GM10248 (cell line): ENCODE measurements at regions of chr14 and their contacts with region 1.

Region 1: GRCh38 chr14:90903101-90903500 is 86.9 kb upstream of the TTC7B start:
- DNase-seq: peak; percentile 72
- CTCF ChIP-seq: peak; percentile 72

Region 2: GRCh38 chr14:90758028-90758889 is 144.8 kb before region 1 on chr14:
- CTCF ChIA-PET with region 1: interaction called, 14 read pairs
- POLR2A ChIA-PET with region 1: no interaction called
- DNase-seq: peak; percentile 99
- CTCF ChIP-seq: peak; percentile 98

Region 3: GRCh38 chr14:90865484-90865883 is 37.6 kb before region 1 on chr14:
- CTCF ChIA-PET with region 1: interaction called, 10 read pairs
- POLR2A ChIA-PET with region 1: no interaction called
- DNase-seq: no peak
- CTCF ChIP-seq: no peak

Region 4: DNA sequence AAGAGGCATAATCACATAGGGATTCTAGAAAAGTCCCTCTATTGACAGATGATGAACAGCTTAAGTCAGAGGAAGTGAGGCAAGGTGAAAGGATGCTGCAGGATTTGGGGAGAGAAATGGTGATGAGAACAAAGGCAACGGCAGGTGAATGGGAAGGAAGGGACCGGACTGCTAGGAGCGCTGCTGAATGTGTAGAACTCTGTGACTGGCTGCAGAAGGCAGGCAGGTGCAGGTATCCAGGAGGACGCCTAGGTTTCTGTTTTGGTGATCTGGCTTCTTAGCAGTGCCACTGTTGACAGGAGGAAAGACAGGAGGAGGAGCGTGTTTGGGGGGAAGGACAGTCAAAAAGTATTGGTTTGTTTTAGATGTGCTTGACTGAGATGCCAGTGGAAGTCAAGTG is 28.5 kb before region 1 on chr14:
- CTCF ChIA-PET with region 1: interaction called, 10 read pairs
- POLR2A ChIA-PET with region 1: no interaction called
- DNase-seq: no peak
- CTCF ChIP-seq: no peak

Region 5: DNA sequence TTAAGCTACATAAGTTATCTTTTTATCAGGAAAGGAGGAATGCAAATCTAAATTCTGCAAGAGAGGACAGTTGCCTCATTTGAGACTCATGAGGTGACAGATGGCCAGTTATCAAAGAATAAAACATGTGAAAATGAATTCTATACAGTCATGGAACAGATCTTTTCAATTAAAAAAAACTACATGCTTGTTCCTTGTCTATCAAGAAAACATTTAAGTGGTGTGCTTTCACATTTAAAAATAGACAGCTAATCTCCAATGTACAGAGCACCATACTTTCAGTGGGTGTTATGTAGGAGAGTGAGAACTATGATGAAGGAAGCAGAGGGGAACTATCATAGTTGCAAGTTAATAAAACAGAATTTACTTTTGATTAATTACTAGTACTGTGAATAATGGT is 10.1 kb before region 1 on chr14:
- CTCF ChIA-PET with region 1: interaction called, 20 read pairs
- POLR2A ChIA-PET with region 1: no interaction called
- DNase-seq: no peak
- CTCF ChIP-seq: no peak

Region 6: DNA sequence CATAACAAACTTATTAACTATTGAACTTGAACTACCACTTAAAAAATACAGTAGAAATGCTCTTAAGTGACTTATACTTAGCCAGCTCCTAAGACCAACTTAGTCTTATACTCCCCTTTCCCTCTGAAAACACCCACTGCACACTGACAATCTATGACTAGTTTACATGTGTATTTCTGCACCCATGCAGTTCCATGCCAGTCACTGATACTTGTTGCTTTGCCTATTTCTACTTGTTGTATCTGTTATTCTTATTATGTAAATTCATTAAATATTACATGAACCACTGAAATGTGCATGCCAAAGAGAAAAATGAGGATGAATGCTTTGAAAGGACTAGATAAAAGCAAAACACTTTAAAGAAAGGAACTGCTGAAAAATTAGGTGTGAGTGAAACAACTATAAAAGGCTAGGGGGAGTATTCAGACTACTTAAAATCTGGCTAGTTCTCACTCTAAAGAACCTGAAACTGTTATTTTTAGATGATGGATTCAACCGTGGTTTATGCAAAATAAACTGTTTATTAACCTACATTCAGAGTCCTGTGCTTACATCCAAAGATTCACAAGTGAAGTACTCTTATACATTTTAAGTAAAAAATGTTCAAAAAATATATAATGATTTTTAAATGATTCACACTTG is 82.6 kb after region 1 on chr14:
- CTCF ChIA-PET with region 1: no interaction called
- POLR2A ChIA-PET with region 1: no interaction called
- DNase-seq: peak; percentile 45
- CTCF ChIP-seq: peak; percentile 28

Region 7: DNA sequence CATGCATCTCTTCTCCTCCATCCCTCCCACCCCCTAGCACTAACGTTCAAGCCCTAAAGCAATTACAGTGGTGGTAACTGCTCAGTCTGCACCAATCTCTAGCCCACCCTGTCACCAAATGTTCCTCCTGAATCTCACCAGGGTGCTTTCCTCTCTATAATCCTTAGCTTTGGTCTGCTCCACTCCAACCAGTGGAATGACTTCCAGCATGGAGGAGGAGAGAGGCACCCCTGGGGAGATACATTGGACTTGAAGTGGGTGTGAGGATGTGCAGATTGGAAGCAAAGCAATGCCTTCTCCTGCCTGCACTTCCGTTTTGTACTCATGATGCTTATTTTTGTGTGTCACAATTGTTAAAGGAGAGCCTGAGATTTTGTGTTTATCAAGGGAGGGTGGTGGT is 181.4 kb after region 1 on chr14:
- CTCF ChIA-PET with region 1: no interaction called
- POLR2A ChIA-PET with region 1: no interaction called
- DNase-seq: no peak
- CTCF ChIP-seq: no peak

Region 8: GRCh38 chr14:91114079-91115065 is 211.3 kb after region 1 on chr14:
- CTCF ChIA-PET with region 1: interaction called, 14 read pairs
- POLR2A ChIA-PET with region 1: no interaction called
- DNase-seq: peak; percentile 81
- CTCF ChIP-seq: no peak

Region 9: DNA sequence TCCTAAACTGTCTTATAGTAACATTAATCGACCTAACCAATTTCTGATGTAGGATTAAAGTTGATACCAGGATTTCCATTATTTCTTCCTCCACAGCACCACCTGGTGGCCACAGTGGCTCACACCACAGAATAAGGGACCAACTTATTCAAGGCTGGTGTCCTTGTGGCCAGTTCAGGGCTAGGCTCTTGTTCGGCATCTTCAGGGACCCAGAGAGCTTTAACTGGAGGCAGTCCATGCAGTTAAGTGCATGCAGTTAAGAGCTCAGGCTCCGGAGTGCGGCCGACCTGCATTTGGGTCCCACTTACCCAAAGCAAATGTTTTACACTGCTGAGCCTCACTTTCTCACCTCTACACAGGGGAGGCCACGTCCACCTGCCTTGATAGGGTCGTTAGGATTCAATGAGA is 383.4 kb after region 1 on chr14:
- CTCF ChIA-PET with region 1: interaction called, 11 read pairs
- POLR2A ChIA-PET with region 1: no interaction called
- DNase-seq: peak; percentile 79
- CTCF ChIP-seq: peak; percentile 87